ENCODE measurements at regions of chr7 and their contacts with region 1.

Region 1: DNA sequence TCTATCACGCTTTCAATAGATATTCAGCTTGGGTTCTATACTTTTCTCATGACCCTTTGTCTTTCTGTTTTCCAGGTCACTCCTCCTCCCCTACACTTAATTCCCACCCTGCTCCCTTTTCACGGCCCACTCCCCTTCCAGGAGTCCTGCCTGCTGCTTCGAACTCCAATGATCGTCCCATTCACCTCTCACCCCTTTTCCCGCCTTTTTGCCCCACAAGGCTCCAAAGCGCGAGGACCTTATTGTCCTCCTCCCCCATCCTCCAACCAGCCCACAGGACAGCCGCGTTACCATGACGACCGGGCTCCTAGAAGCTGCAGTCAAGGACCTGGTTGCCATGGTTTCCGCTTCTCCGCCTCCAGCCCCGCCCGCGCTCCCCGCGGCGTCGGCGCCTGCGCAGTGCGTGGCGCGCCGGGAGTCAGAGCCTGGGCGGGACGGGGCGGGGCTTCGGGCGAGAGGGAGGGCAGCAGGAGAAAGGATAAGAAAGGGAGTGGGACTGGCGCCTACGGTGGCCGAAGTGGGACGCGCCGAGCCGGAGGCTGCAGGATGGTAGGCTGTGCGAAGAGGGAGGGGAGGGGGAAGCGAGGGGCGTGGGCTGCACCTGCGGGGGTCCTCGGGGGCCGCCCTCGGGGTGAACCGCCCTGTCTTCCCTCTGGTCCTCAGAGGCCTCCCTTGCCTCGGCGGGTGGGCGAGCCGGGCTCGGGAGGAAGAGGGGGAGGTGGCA is at the start of gene AP1S1:
- DNase-seq: peak; percentile 72 to 94
- H3K4me3 ChIP-seq: peak within 1 kb of the TSS; percentile 73 to 87
- H3K27ac ChIP-seq: no peak within 1 kb of the TSS
- H3K4me1 ChIP-seq: peaks cover 3% of the 10 kb centered on the region in 2 donors
- H3K27me3 ChIP-seq: no peaks in the 10 kb centered on the region
- CTCF ChIP-seq: no peak
- total RNA-seq, gene AP1S1: 77.4 TPM

Region 2: DNA sequence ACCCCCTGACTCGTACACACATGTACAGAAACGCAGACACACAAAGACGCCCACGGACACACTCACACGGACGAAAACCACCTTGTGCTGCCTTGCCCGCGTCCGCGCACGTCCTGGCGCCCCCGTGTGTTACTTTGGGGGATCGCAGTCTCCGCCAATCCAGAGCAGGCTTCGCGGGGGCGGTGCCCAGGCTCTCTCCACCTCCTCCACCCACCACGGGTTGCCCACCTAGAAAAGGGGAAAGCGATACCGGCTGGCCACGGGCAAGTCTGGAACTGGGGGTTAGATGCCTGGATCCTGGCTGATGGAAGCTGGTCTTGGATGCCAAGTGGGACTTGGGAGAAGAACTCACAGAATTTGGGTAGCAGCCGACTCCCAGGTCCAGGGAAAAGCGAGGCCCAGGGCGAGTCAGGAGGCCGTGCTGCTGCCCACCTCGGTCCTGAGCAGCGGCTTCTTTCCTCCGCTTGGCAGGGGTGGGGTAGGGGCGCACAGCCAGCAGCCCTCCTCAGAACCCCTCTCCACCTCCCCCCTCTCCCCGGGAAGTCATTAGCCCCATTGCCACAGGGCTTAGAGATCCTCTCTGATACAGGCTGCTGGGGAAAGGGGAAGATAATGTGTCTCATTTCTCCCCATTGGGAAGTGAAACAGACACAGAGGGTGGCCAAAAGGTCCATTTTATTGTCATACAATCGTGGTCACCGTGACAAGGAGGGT is 15.9 kb after region 1 on chr7:
- intact Hi-C with region 1: loop called (anchors 1 kb)
- DNase-seq: peak in 1 of 2 donors; percentile 84
- H3K4me3 ChIP-seq: no peak overlapping the region
- H3K27ac ChIP-seq: no peak overlapping the region
- H3K4me1 ChIP-seq: peaks cover 19 to 32% of the 10 kb centered on the region in 2 donors
- H3K27me3 ChIP-seq: peaks cover 50% of the 10 kb centered on the region
- CTCF ChIP-seq: peak; percentile 73 to 86 (median 82)

Measured in ascending aorta (tissue), 2 donors.